ENCODE measurements at regions of chr1 and their contacts with region 1.

Region 1: GRCh38 chr1:75265792-75266191 is 131.6 kb downstream of the LHX8 start:
- DNase-seq: peak; percentile 6
- ATAC-seq: peak; percentile 64
- H3K4me3 ChIP-seq: no peak overlapping the region
- H3K27ac ChIP-seq: no peak overlapping the region
- H3K4me1 ChIP-seq: no peaks in the 10 kb centered on the region
- H3K27me3 ChIP-seq: no peaks in the 10 kb centered on the region
- CTCF ChIP-seq: peak; percentile 47
- POLR2A ChIP-seq: no peak
- RAD21 ChIP-seq: peak; percentile 35; the same call in 1 of the 2 replicates

Region 2: GRCh38 chr1:74933500-74933899 is 332.3 kb before region 1 on chr1:
- CTCF ChIA-PET with region 1: no interaction called
- POLR2A ChIA-PET with region 1: no interaction called
- dilution Hi-C with region 1: no loop called
- in situ Hi-C with region 1: no loop called
- intact Hi-C with region 1: no loop called
- DNase-seq: no peak
- ATAC-seq: no peak
- H3K4me3 ChIP-seq: no peak overlapping the region
- H3K27ac ChIP-seq: no peak overlapping the region
- H3K4me1 ChIP-seq: no peaks in the 10 kb centered on the region
- H3K27me3 ChIP-seq: no peaks in the 10 kb centered on the region
- CTCF ChIP-seq: no peak
- POLR2A ChIP-seq: no peak
- RAD21 ChIP-seq: no peak

Region 3: DNA sequence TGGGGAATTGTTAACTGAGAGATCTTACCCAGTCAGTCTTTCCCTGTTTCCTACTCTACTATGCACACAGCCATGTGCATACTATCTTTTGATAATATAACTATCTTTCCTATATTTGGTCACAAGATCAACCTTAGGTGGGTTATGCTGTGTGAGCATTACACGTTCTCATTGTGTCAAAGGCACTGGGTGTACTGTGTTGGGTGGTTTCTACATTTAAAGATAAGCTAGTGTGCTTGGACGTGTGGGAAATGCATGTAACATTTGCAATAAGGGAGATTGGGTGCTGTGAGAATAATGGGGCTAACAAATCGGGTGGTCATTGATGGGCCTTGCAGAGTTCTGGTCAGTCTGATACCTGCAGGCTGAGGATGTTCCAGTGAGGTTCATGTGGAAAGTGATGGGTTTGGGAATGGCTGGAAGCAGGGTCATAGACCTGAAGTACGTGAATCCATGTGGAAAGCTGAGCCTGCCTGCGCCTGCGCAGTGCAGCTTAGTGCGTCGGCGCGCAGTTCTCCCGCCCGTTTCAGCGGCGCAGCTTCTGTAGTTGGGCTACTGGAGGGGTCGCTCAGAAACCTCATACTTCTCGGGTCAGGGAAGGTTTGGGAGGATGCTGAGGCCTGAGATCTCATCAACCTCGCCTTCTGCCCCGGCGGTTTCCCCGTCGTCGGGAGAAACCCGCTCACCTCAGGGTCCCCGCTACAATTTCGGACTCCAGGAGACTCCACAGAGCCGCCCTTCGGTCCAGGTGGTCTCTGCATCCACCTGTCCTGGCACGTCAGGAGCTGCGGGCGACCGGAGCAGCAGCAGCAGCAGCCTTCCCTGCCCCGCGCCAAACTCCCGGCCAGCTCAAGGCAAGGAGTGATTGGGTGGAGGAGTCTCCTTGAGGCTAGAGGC is 530.8 kb after region 1 on chr1 and contains the start of gene MSH4:
- CTCF ChIA-PET with region 1: no interaction called
- POLR2A ChIA-PET with region 1: no interaction called
- dilution Hi-C with region 1: no loop called
- in situ Hi-C with region 1: no loop called
- intact Hi-C with region 1: loop called (anchors 10 kb)
- DNase-seq: no peak
- ATAC-seq: peak; percentile 29
- H3K4me3 ChIP-seq: no peak within 1 kb of the TSS
- H3K27ac ChIP-seq: no peak within 1 kb of the TSS
- H3K4me1 ChIP-seq: no peaks in the 10 kb centered on the region
- H3K27me3 ChIP-seq: no peaks in the 10 kb centered on the region
- CTCF ChIP-seq: no peak
- POLR2A ChIP-seq: no peak
- RAD21 ChIP-seq: no peak
- total RNA-seq, gene MSH4: under 0.01 TPM in 2 replicates